ENCODE measurements at regions of chr2 and their contacts with region 1.

Region 1: DNA sequence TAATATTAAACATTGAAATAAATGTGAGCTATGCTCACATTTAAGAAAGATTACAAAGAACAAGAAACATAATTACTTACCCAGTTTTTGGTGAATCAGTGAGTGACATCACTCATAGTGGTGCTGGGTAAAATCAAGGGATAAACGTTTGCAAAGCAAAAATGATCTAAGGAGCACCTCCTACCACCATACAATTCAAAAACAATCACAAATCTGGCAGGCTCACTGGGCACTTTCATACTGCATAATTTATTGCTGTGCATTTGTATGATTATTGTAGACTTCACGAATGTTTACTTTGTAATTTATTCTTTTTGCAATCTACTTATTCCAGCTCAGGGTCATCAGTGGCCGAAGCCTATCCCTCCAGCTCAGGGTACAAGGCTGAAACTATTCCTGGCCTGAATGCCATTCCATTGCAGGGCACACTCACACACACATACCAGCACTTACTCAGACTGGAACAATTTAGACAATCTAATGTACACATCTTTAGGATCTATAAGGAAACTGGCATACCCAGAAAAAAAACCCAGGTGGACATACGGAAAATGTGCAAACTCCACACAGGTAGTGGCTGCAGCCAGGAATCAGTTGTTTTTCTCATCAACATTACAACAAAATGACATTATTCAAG is 34.4 kb downstream of the AFTPH start:
- DNase-seq: no peak

Region 2: DNA sequence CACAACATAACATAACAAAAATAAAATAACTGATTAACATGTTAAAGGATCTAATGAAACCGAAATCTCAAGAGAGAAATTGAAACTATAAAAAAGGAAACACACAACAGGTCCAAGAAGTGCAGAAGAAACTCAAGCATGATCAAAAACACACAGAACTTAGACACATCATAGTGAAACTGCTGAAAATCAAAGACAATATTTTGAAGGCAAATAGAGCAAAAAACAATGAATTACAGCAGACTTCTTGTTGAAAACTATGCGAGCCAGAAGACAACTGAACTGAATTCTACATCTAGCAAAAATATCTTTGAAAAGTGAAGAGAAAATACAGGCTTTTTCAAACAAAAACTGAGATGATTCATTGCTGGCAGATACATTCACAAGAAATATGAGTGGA is 655.6 kb before region 1 on chr2:
- intact Hi-C with region 1: loop called in 1 of 2 experiments (anchors 10 kb)
- DNase-seq: no peak

Region 3: DNA sequence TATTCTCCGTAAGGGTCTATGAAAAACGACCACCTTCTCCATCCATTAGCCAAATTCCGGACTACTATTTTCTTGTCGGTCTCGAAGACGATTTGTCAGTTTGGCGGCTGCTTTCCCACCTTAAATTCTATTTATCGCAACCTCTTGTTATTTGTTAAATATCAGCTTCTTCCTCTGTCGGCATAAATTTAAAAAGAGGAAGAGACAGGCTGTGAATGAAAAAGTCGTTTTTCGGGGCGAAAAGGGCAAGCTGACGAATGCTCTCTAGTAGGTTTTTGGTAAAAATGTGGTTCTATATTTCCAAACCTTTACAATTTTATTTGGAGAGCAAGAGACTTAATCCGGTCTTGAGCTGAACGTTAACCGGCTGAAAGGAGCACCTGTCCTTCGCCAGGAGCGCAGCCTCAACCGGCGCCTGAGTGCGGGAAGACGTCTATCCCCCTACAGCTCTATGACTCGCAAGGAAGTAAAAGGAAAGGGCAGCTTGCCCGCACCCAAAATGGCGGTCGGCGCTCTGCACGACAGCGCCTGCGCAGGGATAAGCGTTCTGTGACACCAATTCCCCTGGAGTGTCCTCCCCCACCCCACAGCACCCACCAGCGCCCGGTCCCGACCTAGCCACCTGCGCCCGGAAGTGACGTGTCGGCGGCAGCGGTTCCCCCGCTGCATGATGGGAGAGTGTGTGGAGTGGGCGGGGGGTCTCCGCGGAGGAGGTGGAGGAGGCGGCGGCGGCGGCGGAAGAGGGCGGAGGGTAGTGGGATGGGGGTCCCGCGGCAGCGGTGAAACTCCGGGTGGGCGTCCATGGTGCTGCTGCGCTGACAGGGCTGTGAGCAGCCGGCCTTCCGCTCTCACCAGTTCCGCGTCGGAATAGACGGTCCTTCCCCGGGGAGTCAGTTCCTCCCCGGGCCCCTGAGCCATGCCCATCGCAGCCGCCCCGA is 34.6 kb before region 1 on chr2 and contains the start of gene AFTPH:
- intact Hi-C with region 1: no loop called
- DNase-seq: peak; percentile 99
- total RNA-seq, gene AFTPH: 18.7 to 27.8 TPM

Region 4: GRCh38 chr2:65737452-65738011 is 1179.0 kb after region 1 on chr2:
- intact Hi-C with region 1: no loop called
- DNase-seq: no peak